Ascending aorta (tissue), 2 donors: ENCODE measurements at regions of chr10 and their contacts with region 1.

Region 1: DNA sequence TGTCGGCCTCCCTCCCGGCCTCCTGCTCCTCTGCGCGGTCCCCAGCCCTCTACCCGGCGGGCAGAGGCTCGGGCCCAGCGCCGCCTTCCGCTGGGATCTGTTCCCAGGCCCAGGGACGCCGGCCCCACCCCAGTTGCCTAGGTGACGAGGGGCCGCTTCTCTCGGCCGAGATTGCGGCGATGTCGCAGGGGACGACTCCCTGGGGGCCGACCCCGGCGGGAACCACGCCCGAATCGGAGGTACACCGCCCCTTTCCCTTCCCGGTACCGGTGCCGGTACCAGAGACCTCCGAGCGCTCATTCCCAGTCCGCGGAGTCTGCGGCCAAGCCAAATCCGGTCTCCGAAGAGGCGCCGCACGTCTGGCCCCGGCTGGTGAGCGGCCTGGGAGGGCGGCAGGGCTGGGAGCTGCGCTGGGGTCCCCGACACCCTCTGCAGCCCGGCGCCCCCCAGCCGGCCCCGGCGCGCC is at the start of gene CABCOCO1:
- DNase-seq: peak in 1 of 2 donors; percentile 69
- H3K4me3 ChIP-seq: peak within 1 kb of the TSS; percentile 62 to 69
- H3K27ac ChIP-seq: peak within 1 kb of the TSS; percentile 39 to 62
- H3K4me1 ChIP-seq: no peaks in the 10 kb centered on the region
- H3K27me3 ChIP-seq: no peaks in the 10 kb centered on the region
- CTCF ChIP-seq: peak in 2 of 3 experiments; percentile 10 to 31
- total RNA-seq, gene CABCOCO1: not detected

Region 2: DNA sequence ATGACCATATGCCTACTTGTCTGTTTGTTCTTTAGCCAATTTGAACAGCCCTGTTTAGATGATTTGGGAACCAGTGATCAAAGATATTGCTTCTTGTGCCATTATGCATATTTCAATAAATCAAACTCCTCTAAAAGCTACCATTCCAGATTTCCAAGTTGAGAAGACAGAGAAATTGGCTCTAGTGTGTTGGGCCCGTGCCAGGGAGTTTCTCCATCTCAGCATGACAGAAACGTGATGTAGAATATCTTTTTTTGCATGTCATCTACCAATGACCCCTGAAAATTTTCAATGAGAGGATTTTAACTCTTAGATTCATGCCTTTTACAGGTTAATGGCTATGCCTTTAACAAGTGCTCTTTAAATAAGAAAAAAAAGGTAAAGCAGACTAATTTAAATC is 50.8 kb before region 1 on chr10:
- intact Hi-C with region 1: loop called (anchors 5 kb)
- DNase-seq: no peak
- H3K4me3 ChIP-seq: no peak overlapping the region
- H3K27ac ChIP-seq: no peak overlapping the region
- H3K4me1 ChIP-seq: no peaks in the 10 kb centered on the region
- H3K27me3 ChIP-seq: no peaks in the 10 kb centered on the region
- CTCF ChIP-seq: no peak

Region 3: DNA sequence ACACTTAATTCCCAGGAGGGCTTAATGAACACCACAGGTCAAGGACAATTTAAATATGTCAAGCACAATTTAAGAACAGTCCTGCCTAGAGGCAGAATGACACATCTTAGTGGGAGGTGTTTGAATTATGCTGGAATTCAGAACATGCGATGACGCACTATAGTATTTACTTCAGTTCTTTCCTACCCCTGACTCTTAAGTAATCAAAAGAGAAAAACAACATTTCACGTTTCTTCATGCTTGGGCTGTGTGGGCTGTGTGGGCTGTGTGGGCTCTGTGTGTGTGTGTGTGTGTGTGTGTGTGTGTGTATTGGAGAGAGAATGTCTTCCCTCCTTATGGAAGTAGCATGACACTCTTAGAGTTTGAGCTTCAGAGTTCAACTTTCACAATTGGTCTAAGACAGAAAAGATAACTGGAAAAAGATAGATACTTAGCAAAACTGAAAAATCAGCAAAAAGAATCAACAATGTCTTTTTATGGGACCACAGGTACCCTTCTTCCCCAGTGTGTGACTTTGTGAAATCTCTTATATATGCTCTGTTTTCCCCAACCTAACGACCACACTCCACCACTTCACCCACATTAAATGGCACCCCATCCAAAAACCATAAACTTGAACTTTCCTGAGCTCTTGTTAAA is 33.8 kb before region 1 on chr10:
- intact Hi-C with region 1: no loop called
- DNase-seq: no peak
- H3K4me3 ChIP-seq: no peak overlapping the region
- H3K27ac ChIP-seq: peak overlapping the region in 1 of 2 donors; percentile 35
- H3K4me1 ChIP-seq: peaks cover 6 to 8% of the 10 kb centered on the region in 2 donors
- H3K27me3 ChIP-seq: no peaks in the 10 kb centered on the region
- CTCF ChIP-seq: no peak

Region 4: GRCh38 chr10:61643316-61643751 is 19.5 kb before region 1 on chr10:
- intact Hi-C with region 1: no loop called
- DNase-seq: no peak
- H3K4me3 ChIP-seq: no peak overlapping the region
- H3K27ac ChIP-seq: no peak overlapping the region
- H3K4me1 ChIP-seq: no peaks in the 10 kb centered on the region
- H3K27me3 ChIP-seq: no peaks in the 10 kb centered on the region
- CTCF ChIP-seq: no peak